ENCODE measurements at regions of chr6 and their contacts with region 1.

Region 1: DNA sequence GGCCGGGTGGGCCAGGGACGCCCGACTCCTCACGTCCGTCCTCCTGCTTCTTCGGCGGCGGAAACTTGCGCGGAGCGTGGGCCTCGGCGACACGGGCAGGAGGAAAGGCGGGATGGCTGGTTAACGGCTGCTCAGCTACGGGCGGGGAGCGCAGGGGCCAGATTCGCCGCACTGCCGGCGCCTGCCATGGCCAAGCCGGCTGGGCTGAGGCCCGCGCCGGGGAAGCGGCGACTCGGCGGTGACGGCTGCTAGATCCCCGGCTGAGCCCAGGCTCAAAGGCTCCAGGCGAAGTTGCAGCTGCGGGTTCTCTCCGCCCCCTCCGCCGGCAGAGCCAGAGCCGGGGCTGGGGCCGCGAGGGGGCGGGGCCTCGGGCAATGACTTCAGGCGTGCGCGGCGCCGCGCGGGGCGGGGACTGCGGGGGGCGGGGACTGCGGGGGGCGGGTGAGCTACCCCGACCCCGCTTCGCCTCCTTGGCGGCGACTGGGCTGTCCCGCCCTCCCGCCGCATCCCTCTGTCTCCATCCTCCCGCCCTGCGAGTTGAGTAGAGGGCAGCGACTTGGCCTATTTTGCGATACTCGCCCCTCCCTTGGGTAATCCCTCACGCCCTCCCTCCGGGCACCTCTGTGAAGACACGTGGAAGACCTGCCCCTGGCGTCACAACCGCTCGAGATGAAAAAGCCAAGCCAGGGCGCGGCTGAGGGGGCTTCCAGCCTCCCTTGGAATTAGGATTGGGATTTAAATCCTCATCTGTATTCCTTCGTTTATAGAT is at the start of gene CEP85L:
- DNase-seq: peak; percentile 84 to 91 (median 89)
- ATAC-seq: peak; percentile 96
- H3K4me3 ChIP-seq: peak within 1 kb of the TSS; percentile 66
- H3K4me3 Mint-ChIP-seq: peak within 1 kb of the TSS; percentile 91 to 97 (median 94)
- H3K27ac ChIP-seq: peak within 1 kb of the TSS; percentile 87
- H3K27ac Mint-ChIP-seq: peak within 1 kb of the TSS; percentile 88 to 99 (median 94)
- H3K4me1 ChIP-seq: peaks cover 32 to 40% of the 10 kb centered on the region in 2 donors
- H3K4me1 Mint-ChIP-seq: peaks cover 33 to 73% (median 59%) of the 10 kb centered on the region in 7 donors
- H3K27me3 ChIP-seq: no peaks in the 10 kb centered on the region
- H3K27me3 Mint-ChIP-seq: no peaks in the 10 kb centered on the region
- total RNA-seq, gene CEP85L: 51.1 to 89.1 (median 78.6) TPM

Region 2: GRCh38 chr6:118542184-118542952 is 109.1 kb before region 1 on chr6:
- CTCF ChIA-PET with region 1: no interaction called
- POLR2A ChIA-PET with region 1: no interaction called
- intact Hi-C with region 1: no loop called
- DNase-seq: no peak
- ATAC-seq: no peak
- H3K4me3 ChIP-seq: no peak overlapping the region
- H3K4me3 Mint-ChIP-seq: peak overlapping the region in 1 of 10 donors; percentile 41
- H3K27ac ChIP-seq: no peak overlapping the region
- H3K27ac Mint-ChIP-seq: peak overlapping the region in 3 of 9 donors; percentile 8 to 68 (median 60)
- H3K4me1 ChIP-seq: peaks cover 0 to 8% of the 10 kb centered on the region in 2 donors
- H3K4me1 Mint-ChIP-seq: peaks cover 10 to 82% (median 67%) of the 10 kb centered on the region in 7 donors
- H3K27me3 ChIP-seq: no peaks in the 10 kb centered on the region
- H3K27me3 Mint-ChIP-seq: no peaks in the 10 kb centered on the region

Region 3: GRCh38 chr6:118589186-118589585 is 62.3 kb before region 1 on chr6:
- CTCF ChIA-PET with region 1: no interaction called
- POLR2A ChIA-PET with region 1: no interaction called
- intact Hi-C with region 1: no loop called
- DNase-seq: no peak
- ATAC-seq: no peak
- H3K4me3 ChIP-seq: no peak overlapping the region
- H3K4me3 Mint-ChIP-seq: no peak overlapping the region
- H3K27ac ChIP-seq: no peak overlapping the region
- H3K27ac Mint-ChIP-seq: peak overlapping the region in 8 of 9 donors; percentile 32 to 90 (median 75)
- H3K4me1 ChIP-seq: no peaks in the 10 kb centered on the region
- H3K4me1 Mint-ChIP-seq: peaks cover 9 to 88% (median 68%) of the 10 kb centered on the region in 7 donors
- H3K27me3 ChIP-seq: no peaks in the 10 kb centered on the region
- H3K27me3 Mint-ChIP-seq: no peaks in the 10 kb centered on the region

Region 4: GRCh38 chr6:118639054-118639964 is 12.2 kb before region 1 on chr6:
- CTCF ChIA-PET with region 1: no interaction called
- POLR2A ChIA-PET with region 1: interaction called, 5 read pairs
- intact Hi-C with region 1: loop called in 1 of 2 experiments (anchors 1 kb)
- DNase-seq: peak in 2 of 9 donors; percentile 17 to 28
- ATAC-seq: peak; percentile 57
- H3K4me3 ChIP-seq: no peak overlapping the region
- H3K4me3 Mint-ChIP-seq: peak overlapping the region in 8 of 10 donors; percentile 7 to 71 (median 38)
- H3K27ac ChIP-seq: no peak overlapping the region
- H3K27ac Mint-ChIP-seq: peak overlapping the region in 6 of 9 donors; percentile 34 to 86 (median 48)
- H3K4me1 ChIP-seq: peaks cover 10 to 12% of the 10 kb centered on the region in 2 donors
- H3K4me1 Mint-ChIP-seq: peaks cover 31 to 88% (median 80%) of the 10 kb centered on the region in 7 donors
- H3K27me3 ChIP-seq: no peaks in the 10 kb centered on the region
- H3K27me3 Mint-ChIP-seq: no peaks in the 10 kb centered on the region

Region 5: GRCh38 chr6:118934461-118935330 is 283.2 kb after region 1 on chr6 and contains the start of gene MCM9:
- CTCF ChIA-PET with region 1: no interaction called
- POLR2A ChIA-PET with region 1: no interaction called
- intact Hi-C with region 1: loop called (anchors 1 to 2 kb)
- DNase-seq: peak; percentile 77 to 93 (median 86)
- ATAC-seq: peak; percentile 92
- H3K4me3 ChIP-seq: peak within 1 kb of the TSS; percentile 98
- H3K4me3 Mint-ChIP-seq: peak within 1 kb of the TSS; percentile 86 to 96 (median 91)
- H3K27ac ChIP-seq: peak within 1 kb of the TSS; percentile 95
- H3K27ac Mint-ChIP-seq: peak within 1 kb of the TSS; percentile 86 to 95 (median 93)
- H3K4me1 ChIP-seq: peaks cover 4 to 8% of the 10 kb centered on the region in 2 donors
- H3K4me1 Mint-ChIP-seq: peaks cover 22 to 47% (median 41%) of the 10 kb centered on the region in 7 donors
- H3K27me3 ChIP-seq: no peaks in the 10 kb centered on the region
- H3K27me3 Mint-ChIP-seq: no peaks in the 10 kb centered on the region
- total RNA-seq, gene MCM9: 21.8 to 33.7 (median 31.1) TPM

Measured in naive thymus-derived CD4-positive, alpha-beta T cell (primary cell).